ENCODE measurements at regions of chr5 and their contacts with region 1.

Region 1: GRCh38 chr5:88729084-88729828 is 153.7 kb downstream of the MEF2C start:
- DNase-seq: no peak
- ATAC-seq: peak; percentile 83

Region 2: GRCh38 chr5:88785391-88786219 is 56.3 kb after region 1 on chr5:
- intact Hi-C with region 1: loop called (anchors 10 kb)
- DNase-seq: no peak
- ATAC-seq: peak; percentile 94

Region 3: GRCh38 chr5:90264689-90265544 is 1535.7 kb after region 1 on chr5:
- intact Hi-C with region 1: loop called (anchors 10 kb)
- DNase-seq: peak; percentile 41
- ATAC-seq: peak; percentile 53

Measured in left ventricle myocardium superior (tissue), 1 donor.